IMR-90 (cell line): ENCODE measurements at regions of chr19 and their contacts with region 1.

Region 1: DNA sequence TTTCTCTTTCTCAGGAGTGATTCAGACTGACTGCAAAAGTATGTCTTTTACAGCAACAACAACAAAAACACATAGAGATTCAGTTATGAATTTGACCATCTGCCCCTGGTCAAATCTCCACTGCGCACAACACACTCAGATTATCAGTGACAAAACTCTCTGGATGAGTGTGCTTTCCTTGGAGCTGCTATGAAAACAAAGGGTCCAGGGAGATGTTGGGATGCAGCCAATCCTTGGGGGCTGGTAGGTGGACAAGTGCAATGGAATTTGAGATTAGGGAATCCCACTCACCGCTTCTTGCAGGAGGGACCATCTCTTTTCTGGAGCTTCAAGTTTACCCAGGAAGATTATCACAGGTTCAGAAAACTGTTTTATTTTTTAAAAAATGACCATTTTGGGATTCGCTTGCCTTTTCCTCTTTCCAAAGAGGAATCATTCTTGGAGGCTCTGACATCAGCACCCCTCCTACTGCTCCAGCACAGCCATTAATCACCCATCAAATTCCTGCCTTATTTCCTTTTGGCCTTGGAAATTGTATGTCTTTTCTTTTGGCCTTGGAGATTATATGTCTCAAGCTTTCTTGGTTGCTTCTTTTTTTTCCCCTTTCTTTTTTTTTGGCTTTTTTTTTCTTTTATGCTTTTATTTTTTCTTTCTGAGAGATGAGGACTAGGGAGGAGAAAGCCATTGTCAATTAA is 311.8 kb downstream of the TSHZ3 start:
- DNase-seq: no peak
- ATAC-seq: no peak
- H3K4me3 ChIP-seq: no peak overlapping the region
- H3K27ac ChIP-seq: no peak overlapping the region
- H3K4me1 ChIP-seq: no peaks in the 10 kb centered on the region
- H3K27me3 ChIP-seq: peaks cover 3% of the 10 kb centered on the region
- CTCF ChIP-seq: no peak
- POLR2A ChIP-seq: no peak
- RAD21 ChIP-seq: no peak

Region 2: DNA sequence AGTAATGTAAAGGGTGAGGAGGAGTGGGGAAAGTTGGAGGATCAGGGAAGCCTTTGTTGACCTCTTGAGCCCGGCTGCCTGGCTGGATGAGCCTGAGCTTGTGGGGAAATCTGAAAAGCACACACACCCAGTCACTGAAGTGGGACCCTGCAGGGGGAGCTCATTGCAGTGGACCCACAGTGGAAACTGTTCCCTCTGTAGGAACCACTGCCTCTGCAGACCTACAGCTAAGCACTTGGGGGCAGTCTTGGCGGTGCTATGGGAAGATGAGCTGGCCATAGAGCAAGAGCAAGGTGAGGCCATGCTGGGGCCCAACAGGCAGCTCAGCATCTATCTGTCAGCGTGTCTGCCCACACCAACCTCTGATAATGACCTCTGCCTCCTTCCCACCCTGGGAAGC is 17.0 kb after region 1 on chr19:
- CTCF ChIA-PET with region 1: interaction called, 13 read pairs
- POLR2A ChIA-PET with region 1: no interaction called
- dilution Hi-C with region 1: no loop called
- in situ Hi-C with region 1: no loop called
- intact Hi-C with region 1: no loop called
- DNase-seq: peak; percentile 83
- ATAC-seq: peak; percentile 98
- H3K4me3 ChIP-seq: no peak overlapping the region
- H3K27ac ChIP-seq: no peak overlapping the region
- H3K4me1 ChIP-seq: no peaks in the 10 kb centered on the region
- H3K27me3 ChIP-seq: peaks cover 5% of the 10 kb centered on the region
- CTCF ChIP-seq: peak; percentile 95
- POLR2A ChIP-seq: no peak
- RAD21 ChIP-seq: peak; percentile 97